GM23248 (cell line): ENCODE measurements at regions of chr19 and their contacts with region 1.

Region 1: DNA sequence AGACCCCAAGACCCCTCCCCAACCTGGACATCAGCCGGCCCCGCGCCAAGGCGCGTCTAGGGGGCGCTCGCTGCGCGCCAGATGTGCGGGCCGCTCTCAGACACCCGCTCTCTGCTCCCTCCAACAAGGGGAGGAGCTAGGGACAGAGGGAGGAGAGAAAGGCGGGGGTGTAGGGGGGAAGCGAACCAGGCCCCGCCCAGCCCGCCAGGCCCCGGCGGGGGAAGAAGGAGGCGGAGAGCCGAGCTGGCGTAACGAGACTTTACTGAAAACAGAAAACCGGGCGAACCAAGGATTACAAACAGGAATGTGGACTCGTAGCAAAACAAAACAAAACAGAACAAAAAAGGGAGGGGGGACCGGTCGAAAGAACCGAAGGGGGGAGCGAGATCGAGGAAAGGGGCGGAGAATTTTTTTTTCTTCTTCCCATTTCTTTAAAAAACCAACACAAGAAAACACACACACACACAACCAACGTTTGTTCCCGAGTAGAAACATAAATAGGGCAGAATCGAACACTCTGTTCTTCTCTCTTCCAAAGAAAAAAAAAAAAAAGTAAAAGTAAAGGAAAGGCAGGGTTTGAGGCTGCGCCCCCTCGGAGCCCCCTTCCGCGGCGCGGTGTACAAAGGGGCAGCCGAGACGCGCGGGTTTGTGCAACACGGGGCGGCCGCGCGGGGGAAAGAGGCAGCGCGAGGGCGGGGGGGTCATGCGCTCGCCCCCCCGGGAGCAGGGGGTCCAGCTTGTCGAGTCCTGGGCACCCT is 1.7 kb downstream of the JUND start:
- DNase-seq: peak; percentile 97
- H3K4me3 ChIP-seq: peak overlapping the region; percentile 89
- H3K27ac ChIP-seq: peak overlapping the region; percentile 95
- H3K4me1 ChIP-seq: peaks cover 30% of the 10 kb centered on the region
- H3K27me3 ChIP-seq: no peaks in the 10 kb centered on the region

Region 2: DNA sequence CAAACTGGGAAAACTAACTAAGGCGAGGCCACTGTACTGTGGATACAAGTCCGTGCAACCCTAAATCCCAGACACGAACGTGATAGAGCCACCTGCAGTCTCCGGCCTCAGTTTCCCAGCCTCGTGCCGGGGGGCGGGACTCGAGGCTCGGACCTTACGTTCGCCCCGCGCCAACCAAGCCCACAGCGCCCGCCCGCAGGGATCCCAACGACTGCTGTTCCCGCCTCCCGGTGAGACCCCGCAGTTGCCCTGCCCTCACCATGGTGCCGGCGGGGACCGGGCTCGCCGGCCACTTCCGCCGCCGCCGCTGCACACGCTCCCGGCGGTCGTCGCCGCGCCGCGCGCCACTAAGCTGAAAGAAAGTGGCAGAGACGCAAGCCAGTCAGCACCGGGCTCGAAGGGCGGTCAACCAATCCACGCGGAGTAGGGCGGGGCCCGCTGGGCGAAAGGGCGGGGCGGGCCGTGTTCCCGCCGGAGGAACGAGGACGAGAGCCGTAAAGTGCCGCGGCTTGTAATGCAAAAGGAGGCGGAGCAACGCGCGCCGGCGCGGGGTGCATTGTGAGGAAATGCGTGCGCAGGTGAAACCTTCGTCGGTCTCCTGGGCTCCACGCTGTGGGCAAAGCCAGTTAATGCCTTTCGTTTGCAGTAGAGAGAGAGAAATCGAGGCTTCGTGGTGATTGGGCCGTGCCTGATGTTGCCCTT is 43.2 kb after region 1 on chr19 and contains the start of gene LSM4:
- in situ Hi-C with region 1: loop called (anchors 5 kb)
- DNase-seq: peak; percentile 99
- H3K4me3 ChIP-seq: peak within 1 kb of the TSS; percentile 81
- H3K27ac ChIP-seq: peak within 1 kb of the TSS; percentile 82
- H3K4me1 ChIP-seq: peaks cover 20% of the 10 kb centered on the region
- H3K27me3 ChIP-seq: no peaks in the 10 kb centered on the region
- total RNA-seq, gene LSM4: 167 and 203 TPM in 2 replicates